ENCODE measurements at regions of chr15 and their contacts with region 1.

Region 1: DNA sequence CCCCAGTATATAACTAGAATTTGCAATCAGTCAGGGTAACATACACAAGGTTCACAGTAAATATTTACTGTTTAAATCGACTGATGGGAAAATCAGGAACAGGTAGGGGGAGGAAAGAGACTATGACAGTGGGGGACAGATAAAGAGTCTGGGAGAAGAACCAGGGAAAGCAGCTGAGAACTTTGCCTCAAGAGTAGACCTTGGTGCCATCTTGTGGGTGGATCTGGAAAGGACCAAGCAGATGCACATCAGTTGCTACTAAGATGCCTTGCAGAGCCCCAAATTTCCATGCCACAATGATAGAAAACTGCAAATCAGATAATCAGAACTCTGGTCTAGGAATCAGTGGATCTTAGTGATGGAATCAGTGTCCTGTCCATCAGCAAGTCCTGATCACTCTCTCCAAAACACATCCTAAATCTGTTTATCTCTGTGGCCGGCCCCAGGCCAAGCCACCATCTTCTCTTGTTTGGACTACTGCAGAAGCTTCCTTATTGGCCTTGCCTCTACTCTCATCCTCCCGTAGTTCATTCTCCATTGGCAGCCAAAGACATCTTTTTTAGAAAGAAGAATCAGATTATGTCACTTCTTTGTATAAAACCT is 62.7 kb downstream of the PDE8A start:
- DNase-seq: peak; percentile 74
- H3K4me3 Mint-ChIP-seq: no peak overlapping the region
- H3K27ac Mint-ChIP-seq: no peak overlapping the region
- H3K4me1 Mint-ChIP-seq: peaks cover 16% of the 10 kb centered on the region
- H3K27me3 Mint-ChIP-seq: no peaks in the 10 kb centered on the region

Region 2: DNA sequence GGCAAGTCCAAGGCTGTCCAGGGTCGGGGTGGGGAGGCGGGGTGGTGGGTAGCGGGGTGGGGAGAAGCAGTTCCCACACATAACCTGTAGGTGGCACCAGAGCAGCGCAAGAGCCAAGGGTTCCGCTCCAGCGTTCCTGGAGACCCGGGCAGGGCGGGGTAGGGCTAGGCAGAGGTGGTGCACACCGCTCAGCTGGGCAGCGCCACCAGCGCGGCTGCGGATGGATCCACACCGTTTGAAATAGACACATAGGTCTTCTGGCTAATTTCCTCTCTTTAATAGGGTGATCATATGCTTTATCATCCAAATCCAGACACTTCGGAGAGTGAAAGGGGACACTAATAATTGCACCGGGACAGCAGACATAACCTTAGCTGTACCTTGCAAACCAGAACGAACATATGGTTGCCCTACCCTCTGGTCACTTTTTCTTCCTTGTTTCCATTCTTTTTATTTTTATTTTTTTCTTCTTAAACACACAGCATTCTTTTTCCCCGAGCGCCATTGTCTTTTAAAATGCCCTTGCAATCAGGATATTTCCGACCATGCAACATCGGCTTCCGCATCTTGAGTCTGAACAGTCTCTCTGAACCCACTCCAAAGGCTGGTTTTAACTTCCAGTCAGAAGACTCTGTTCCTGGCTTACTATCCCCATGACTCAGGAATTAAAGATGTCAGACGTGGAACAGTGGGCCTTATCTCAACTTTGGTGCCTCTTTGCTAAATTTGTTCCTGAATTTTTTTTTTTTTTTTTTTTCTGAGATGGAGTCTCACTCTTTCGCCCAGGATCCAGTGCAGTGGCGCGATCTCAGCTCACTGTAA is 456.1 kb before region 1 on chr15:
- CTCF ChIA-PET with region 1: interaction called, 5 read pairs
- intact Hi-C with region 1: loop called (anchors 5 kb)
- DNase-seq: peak; percentile 89
- H3K4me3 Mint-ChIP-seq: peak overlapping the region; percentile 34
- H3K27ac Mint-ChIP-seq: no peak overlapping the region
- H3K4me1 Mint-ChIP-seq: peaks cover 2% of the 10 kb centered on the region
- H3K27me3 Mint-ChIP-seq: peaks cover 4% of the 10 kb centered on the region

Region 3: DNA sequence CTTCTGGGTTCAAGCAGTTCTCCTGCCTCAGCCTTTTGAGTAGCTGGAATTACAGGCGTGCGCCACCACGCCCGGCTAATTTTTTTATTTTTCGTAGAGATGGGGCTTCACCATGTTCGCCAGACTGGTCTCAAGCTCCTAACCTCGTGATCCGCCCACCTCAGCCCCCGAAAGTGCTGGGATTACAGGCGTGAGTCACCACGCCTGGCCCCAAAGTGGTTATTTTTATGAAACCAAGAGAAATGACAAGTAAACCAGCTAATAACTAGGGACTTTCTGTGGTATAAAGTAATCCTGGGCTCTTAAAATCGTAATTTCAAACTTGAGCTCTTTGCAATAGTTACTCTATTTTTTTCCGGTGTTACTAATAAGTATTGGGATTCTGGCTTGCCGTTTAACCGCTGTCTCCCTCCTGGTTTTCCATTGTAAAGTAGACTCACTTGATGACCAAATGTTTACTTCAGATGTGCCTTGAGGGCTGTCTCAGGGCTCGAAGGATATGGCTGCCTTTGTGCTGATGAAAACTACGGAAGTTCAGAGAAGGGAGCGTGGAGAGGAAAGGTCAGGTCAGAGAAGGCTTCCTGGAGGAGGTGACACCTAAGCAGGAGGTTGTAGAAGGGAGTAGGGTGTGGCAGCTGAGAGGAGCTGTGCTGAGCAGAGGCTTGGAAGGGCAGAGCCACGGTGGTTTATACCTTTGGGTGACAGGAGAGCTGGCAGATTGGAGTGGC is 439.4 kb before region 1 on chr15:
- CTCF ChIA-PET with region 1: no interaction called
- intact Hi-C with region 1: no loop called
- DNase-seq: peak; percentile 43
- H3K4me3 Mint-ChIP-seq: no peak overlapping the region
- H3K27ac Mint-ChIP-seq: peak overlapping the region; percentile 5
- H3K4me1 Mint-ChIP-seq: peaks cover 49% of the 10 kb centered on the region
- H3K27me3 Mint-ChIP-seq: no peaks in the 10 kb centered on the region

Region 4: DNA sequence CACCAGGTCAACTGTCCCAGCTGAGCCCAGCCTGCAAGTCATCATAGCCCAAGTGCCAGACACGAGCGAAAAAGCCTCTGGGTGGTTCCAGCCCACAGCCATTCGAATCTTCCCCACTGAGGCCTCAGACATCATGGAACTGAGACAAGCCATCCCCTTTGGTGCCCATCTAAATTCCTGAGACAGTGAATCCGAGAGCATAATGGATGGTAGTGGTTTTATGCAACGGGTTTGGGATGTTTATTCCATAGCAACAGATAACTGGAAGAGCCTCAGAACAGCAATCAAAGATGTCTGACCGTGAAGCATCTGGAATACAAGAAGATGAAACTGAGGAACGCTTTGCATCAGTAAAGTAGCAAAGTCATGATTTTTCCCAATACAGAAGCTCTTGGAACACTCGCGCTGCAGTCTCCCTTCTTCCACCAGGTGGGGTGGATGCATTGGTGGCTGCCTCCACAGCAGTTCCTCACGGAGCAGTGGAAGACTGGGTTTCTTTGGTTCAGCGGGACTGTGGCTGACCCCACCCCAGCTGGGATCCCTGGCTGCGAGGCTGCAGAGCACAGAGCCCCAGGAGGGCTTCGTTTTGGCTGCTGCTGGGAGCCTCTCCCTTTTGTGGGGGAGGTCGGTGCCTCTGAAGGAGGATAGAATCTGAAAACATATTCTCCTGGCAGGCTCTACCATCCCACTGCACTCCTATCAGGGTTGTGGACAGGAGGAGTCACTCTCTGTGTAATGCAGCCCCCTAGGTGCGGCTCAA is 89.1 kb before region 1 on chr15:
- CTCF ChIA-PET with region 1: interaction called, 11 read pairs
- intact Hi-C with region 1: loop called (anchors 1 kb)
- DNase-seq: peak; percentile 69
- H3K4me3 Mint-ChIP-seq: no peak overlapping the region
- H3K27ac Mint-ChIP-seq: no peak overlapping the region
- H3K4me1 Mint-ChIP-seq: peaks cover 8% of the 10 kb centered on the region
- H3K27me3 Mint-ChIP-seq: peaks cover 4% of the 10 kb centered on the region

Region 5: GRCh38 chr15:85030301-85031049 is 13.9 kb before region 1 on chr15:
- CTCF ChIA-PET with region 1: interaction called, 18 read pairs
- intact Hi-C with region 1: no loop called
- DNase-seq: peak; percentile 31
- H3K4me3 Mint-ChIP-seq: no peak overlapping the region
- H3K27ac Mint-ChIP-seq: no peak overlapping the region
- H3K4me1 Mint-ChIP-seq: peaks cover 51% of the 10 kb centered on the region
- H3K27me3 Mint-ChIP-seq: no peaks in the 10 kb centered on the region

Region 6: DNA sequence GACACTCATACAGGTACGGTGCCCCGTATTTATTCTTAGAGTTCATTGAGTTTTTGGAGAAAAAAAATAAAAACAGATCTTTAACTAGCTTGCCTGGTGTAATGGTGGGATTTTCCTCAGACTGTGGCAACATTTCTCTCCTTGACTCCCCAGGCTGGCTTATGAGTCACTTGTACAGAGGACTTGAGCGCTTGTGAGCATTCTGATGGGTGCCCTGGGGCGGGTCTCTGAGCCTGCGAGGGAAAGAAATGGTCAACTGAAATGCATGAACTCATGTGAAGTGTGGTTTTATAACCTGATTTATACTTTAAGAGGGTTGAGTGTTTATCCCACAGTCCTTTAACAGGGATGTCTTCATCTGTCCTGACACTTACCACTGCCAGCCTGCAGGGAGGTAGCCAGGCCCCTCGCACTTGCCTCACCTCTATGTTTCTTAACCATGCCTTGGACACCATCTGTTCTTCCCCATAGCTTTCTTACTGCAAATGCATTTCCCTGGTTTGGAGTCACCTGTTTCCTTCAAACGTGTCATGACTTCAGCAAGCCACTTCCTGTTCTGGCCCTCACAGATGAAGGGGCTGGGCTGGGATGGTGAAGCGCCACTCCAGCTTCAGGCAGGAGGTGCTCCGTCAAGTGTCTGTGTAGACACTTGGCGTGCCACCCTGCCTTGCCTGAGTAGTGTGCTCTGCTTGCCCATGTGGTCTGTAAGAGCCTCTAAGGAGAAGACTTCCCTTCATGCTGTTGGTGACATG is 56.0 kb after region 1 on chr15:
- CTCF ChIA-PET with region 1: no interaction called
- intact Hi-C with region 1: no loop called
- DNase-seq: peak; percentile 7
- H3K4me3 Mint-ChIP-seq: no peak overlapping the region
- H3K27ac Mint-ChIP-seq: no peak overlapping the region
- H3K4me1 Mint-ChIP-seq: no peaks in the 10 kb centered on the region
- H3K27me3 Mint-ChIP-seq: no peaks in the 10 kb centered on the region